Head of caudate nucleus (tissue), 42 donors: ENCODE measurements at regions of chr3 and their contacts with region 1.

Region 1: GRCh38 chr3:126548556-126549466 is 9.9 kb downstream of the C3orf22 start:
- DNase-seq: peak in 15 of 42 donors; percentile 1 to 36 (median 5)

Region 2: DNA sequence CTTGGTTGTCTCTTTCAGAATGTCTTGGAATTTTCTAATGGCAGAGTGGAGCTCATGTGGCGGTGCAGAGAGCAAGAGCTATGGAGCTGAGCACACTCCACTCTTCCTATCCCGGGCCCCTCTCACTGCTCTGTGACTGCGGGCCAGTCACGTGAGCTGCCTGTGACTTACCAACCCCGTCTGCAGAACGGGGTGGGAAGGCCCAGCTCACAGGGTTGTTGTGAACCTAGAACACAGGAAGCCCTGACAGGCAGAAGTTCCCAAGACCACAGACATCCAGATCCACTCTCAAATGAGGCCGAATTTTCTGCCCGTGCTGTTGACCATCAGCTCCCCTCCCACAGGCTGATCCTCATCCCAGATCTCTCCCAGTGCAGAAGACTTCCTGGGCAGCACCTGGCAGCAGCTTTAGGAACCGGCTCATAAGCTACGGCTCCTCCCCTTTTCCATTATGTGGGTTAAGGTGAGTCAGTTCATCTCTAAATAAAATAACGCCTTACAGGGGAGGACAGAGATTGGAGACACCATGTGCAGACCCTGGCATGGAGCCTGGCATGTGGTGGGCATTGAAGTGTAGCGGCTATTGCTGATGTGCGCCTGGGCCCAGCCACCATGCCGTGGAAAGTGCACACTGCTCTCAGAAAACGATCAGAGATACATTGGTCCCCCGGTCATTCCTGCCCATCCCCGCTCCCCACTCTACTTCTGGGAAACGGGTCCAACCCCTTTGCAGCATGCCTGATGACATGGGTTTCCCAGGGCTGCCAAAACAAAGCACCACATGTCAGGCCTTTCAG is 398.8 kb after region 1 on chr3:
- intact Hi-C with region 1: loop called (anchors 5 kb)
- DNase-seq: peak in 8 of 42 donors; percentile 28 to 58 (median 44)

Region 3: DNA sequence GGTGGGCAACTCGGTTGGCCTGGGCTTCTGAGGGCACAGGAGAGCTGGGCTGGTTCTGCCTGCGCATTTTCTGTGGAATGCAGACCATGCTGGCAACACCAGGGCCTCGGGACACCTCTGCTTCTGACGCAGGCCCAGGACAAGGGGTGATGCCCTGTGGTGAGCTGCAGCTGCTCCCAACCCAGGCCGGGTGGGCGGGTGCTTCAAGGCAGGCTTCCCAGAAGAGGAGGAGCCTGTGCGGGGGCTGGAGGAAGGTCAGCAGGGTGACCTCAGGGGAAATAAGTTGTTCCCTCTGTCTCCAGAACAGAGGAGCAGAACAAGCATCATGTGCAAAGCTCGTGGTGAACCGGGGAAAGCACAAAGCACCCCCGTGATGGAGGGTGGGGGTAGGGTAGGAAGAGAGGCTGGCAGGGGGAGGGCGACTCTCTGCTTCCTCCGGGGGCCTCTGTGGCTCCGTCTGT is 423.1 kb after region 1 on chr3:
- intact Hi-C with region 1: no loop called
- DNase-seq: peak in 40 of 42 donors; percentile 20 to 75 (median 56)